Dorsolateral prefrontal cortex (tissue), 120 donors: ENCODE measurements at regions of chr2 and their contacts with region 1.

Region 1: GRCh38 chr2:192286093-192286701 is 91.5 kb upstream of the TMEFF2 start:
- DNase-seq: peak in 3 of 10 donors; percentile 19 to 60 (median 38)
- H3K4me3 ChIP-seq: no peak overlapping the region
- H3K27ac ChIP-seq: peak overlapping the region in 4 of 59 donors; percentile 5 to 51 (median 23)
- H3K27me3 ChIP-seq: no peaks in the 10 kb centered on the region
- CTCF ChIP-seq: peak in 55 of 56 donors; percentile 21 to 86 (median 60)

Region 2: DNA sequence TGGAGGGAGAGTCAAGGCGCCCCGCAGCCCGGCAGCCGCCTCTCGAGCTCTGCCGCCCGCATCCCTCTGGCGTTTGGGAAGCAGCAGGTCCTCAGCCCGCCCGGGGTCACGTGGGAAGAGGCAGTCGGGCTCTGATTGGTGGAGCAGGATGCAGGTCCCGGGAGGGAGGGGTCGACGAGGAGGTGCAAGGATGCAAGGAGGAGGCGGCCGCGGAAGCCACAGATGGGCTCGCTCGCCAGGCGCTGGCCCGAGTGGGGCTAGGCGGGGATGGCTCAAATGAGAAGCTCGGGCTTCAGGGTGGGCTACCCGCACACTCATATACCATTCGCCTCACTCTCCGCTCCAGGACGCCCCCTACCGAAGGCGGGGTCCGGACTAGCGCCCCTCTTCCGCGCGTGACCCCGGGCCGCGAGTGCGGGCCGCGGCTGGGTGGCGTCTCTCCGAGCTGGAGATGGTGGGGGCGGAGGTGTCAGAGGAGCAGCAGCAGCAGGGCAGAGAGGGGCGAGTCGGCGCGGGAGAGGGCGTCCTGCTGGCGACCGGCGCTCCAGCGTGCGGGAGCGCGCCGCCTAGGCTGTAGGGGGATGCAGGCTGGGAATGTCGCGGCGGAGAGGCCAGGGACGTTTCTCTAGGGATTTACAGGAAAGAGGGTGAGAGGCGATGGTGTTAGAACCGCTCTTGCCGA is 91.2 kb before region 1 on chr2 and contains the start of gene TMEFF2:
- intact Hi-C with region 1: loop called (anchors 2 to 5 kb)
- DNase-seq: peak; percentile 99 to 100 (median 99)
- H3K4me3 ChIP-seq: peak within 1 kb of the TSS; percentile 58 to 93 (median 78)
- H3K27ac ChIP-seq: peak within 1 kb of the TSS; percentile 84 to 98 (median 96)
- H3K27me3 ChIP-seq: peaks cover 0 to 32% (median 0%) of the 10 kb centered on the region in 45 donors
- CTCF ChIP-seq: peak in 55 of 56 donors; percentile 18 to 83 (median 51)
- total RNA-seq, gene TMEFF2: 13.6 to 71.1 (median 44.6) TPM